Gastrocnemius medialis (tissue), 4 donors: ENCODE measurements at regions of chr15 and their contacts with region 1.

Region 1: DNA sequence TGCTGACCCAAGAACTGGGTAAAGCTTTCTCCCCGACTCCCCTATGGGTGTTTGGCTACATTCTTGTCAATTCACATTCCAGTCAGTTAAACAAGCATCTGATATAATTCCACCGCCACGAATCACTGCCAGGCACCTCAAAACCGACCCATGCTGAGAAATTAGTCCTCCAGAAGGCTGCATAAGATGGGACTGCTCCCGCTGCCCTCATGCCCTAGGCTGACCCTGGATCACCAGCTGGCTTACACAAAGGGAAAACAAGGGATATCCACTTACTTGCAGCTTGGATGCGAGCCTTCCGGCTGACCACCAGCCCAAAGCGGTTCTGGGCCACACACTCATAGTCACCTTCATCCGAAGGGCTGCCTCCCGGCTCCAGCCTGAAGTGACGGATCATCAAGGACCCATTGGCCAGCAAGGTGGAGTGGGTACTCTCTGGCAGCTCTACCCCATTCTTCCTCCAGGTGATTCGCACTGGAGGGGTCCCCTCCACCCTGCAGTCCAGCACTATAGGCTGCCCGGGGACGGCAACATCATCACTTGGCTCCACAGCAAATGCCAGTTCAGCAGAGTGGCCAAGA is 2.9 kb downstream of the IGDCC3 start:
- DNase-seq: no peak
- ATAC-seq: no peak
- H3K4me3 ChIP-seq: no peak overlapping the region
- H3K27ac ChIP-seq: no peak overlapping the region
- H3K4me1 ChIP-seq: peaks cover 8 to 15% of the 10 kb centered on the region in 2 donors
- H3K27me3 ChIP-seq: peaks cover 8 to 29% (median 22%) of the 10 kb centered on the region in 3 donors
- CTCF ChIP-seq: no peak
- POLR2A ChIP-seq: no peak

Region 2: GRCh38 chr15:65336493-65337455 is 38.1 kb before region 1 on chr15:
- in situ Hi-C with region 1: loop called in 1 of 4 experiments (anchors 5 kb)
- intact Hi-C with region 1: no loop called
- DNase-seq: no peak
- ATAC-seq: no peak
- H3K4me3 ChIP-seq: no peak overlapping the region
- H3K27ac ChIP-seq: no peak overlapping the region
- H3K4me1 ChIP-seq: no peaks in the 10 kb centered on the region
- H3K27me3 ChIP-seq: no peaks in the 10 kb centered on the region
- CTCF ChIP-seq: no peak
- POLR2A ChIP-seq: no peak

Region 3: DNA sequence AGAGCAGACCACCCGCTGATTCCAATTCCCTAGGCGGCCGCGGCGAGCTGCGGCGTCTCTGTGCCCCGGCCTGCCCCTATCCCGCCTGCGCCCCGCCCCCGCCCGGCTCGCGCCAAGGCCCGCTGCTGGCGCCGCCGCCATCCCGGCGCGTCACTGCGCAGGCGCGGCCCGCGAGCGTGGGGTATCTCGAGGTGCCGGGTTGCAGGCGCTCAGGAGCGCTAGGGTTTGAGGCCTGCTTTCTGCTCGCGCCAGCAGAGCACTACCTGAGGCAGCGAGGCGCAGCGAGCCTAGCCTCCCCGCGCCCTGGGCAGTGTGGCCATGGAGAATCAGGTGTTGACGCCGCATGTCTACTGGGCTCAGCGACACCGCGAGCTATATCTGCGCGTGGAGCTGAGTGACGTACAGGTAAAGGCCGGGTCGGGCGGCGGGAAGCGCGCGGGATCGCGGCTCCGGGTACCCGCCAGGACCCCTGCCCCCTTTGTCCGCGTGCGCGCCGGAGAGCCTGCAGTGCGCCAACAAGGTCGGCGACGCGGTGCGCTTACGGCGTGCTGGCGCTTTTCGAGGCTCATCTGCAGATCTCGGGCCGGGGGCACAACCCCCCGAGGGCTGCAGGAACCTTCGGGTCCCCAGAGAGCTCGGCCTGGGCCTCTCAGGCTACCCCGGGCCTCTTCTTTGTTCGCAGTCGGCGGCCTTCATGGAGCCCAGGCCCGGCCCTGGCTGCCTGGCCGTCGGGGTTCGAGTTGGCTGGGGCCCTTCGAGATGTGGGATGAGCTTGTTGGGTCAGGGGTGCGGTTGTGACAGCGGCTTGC is 155.6 kb after region 1 on chr15 and contains the start of gene HACD3:
- in situ Hi-C with region 1: no loop called
- intact Hi-C with region 1: no loop called
- DNase-seq: peak; percentile 63 to 78
- ATAC-seq: peak; percentile 94 to 95
- H3K4me3 ChIP-seq: peak within 1 kb of the TSS; percentile 65 to 95 (median 88)
- H3K27ac ChIP-seq: peak within 1 kb of the TSS; percentile 73 to 90 (median 86)
- H3K4me1 ChIP-seq: peaks cover 18 to 20% of the 10 kb centered on the region in 2 donors
- H3K27me3 ChIP-seq: no peaks in the 10 kb centered on the region
- CTCF ChIP-seq: no peak
- POLR2A ChIP-seq: peak; percentile 57 to 58
- total RNA-seq, gene HACD3: 4.5 to 9.5 (median 6.5) TPM